ENCODE measurements at regions of chr1 and their contacts with region 1.

Region 1: GRCh38 chr1:172719694-172720138 is 60.8 kb downstream of the FASLG start:
- DNase-seq: no peak

Region 2: DNA sequence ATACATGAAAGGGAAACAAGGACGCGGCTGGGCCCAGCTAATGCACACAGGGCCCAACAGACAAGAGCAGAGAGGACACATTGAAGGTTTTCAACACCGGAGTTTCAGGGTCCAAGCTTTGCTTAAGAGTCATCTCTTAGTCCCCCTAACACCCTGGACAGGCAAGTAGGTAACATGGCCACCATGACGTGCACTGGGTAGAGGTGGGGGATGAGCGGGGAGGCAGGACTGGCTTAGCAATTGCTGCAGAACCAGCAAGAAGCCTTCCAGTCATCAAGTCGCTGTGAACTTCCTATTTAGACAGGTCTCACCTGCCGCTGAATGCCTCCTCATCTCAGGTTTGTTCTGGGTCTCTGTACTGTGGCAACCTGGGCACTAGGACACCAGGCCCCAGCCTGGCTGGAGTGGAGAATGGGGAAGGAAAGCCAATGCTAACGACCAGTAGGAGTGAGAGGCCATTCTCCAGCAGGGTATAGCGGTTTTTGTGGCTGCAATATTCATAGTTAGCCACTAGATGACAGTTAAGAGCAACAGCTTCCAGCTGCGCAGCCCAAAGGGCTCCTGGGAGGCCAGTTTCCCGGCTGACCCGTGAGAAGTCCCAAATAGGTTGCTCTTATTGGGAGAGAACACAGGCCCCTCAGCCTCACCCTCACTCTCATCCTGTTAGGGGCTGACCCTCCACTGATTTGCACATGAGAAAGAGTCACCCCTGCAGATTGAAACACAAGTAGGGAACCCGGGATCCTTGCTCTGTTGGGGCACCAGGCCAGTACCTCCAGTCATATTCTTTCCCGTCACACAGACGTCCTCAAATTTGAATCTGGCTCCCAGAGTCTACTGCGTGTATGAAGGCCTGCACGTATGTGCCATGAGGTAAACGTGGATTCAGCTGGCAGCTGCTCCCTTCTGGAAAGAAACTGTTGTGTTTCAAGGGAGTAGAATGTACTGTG is 269.9 kb before region 1 on chr1:
- intact Hi-C with region 1: loop called (anchors 2 kb)
- DNase-seq: peak; percentile 80

Region 3: GRCh38 chr1:172609528-172609927 is 110.2 kb before region 1 on chr1:
- intact Hi-C with region 1: loop called (anchors 5 kb)
- DNase-seq: no peak

Region 4: GRCh38 chr1:172815740-172816139 is 96.0 kb after region 1 on chr1:
- intact Hi-C with region 1: no loop called
- DNase-seq: no peak